ENCODE measurements at regions of chr7 and their contacts with region 1.

Region 1: GRCh38 chr7:18939771-18940592 is 177.5 kb downstream of the TWIST1 start:
- DNase-seq: no peak
- H3K4me3 ChIP-seq: no peak overlapping the region
- H3K27ac ChIP-seq: no peak overlapping the region
- H3K4me1 ChIP-seq: no peaks in the 10 kb centered on the region
- H3K27me3 ChIP-seq: no peaks in the 10 kb centered on the region
- CTCF ChIP-seq: no peak
- POLR2A ChIP-seq: no peak

Region 2: GRCh38 chr7:18866359-18867036 is 73.5 kb before region 1 on chr7:
- intact Hi-C with region 1: no loop called
- DNase-seq: peak in 1 of 2 donors; percentile 33
- H3K4me3 ChIP-seq: no peak overlapping the region
- H3K27ac ChIP-seq: peak overlapping the region; percentile 48 to 69
- H3K4me1 ChIP-seq: no peaks in the 10 kb centered on the region
- H3K27me3 ChIP-seq: no peaks in the 10 kb centered on the region
- CTCF ChIP-seq: no peak
- POLR2A ChIP-seq: no peak

Region 3: DNA sequence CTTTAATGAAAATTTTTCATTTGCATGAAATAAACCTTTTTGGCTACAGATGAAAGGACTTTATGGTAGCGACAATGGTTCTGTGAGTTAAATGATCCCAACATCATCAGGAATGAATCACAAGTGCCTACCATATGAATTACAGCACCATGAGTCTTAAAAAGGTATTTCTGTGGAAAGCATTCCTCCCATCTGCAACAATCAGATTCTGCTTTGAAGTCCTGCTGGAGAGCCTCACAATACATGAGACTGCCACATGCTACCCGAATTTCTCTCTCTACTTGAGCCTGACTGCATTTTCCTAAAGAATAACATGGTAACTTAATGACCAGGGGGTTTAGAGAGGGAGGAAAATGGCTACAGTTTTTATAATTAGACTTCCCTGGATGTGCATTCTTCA is 12.8 kb before region 1 on chr7:
- intact Hi-C with region 1: loop called (anchors 1 kb)
- DNase-seq: no peak
- H3K4me3 ChIP-seq: no peak overlapping the region
- H3K27ac ChIP-seq: no peak overlapping the region
- H3K4me1 ChIP-seq: no peaks in the 10 kb centered on the region
- H3K27me3 ChIP-seq: no peaks in the 10 kb centered on the region
- CTCF ChIP-seq: no peak
- POLR2A ChIP-seq: no peak

Region 4: GRCh38 chr7:19677180-19677579 is 737.2 kb after region 1 on chr7:
- intact Hi-C with region 1: no loop called
- DNase-seq: no peak
- H3K4me3 ChIP-seq: no peak overlapping the region
- H3K27ac ChIP-seq: no peak overlapping the region
- H3K4me1 ChIP-seq: no peaks in the 10 kb centered on the region
- H3K27me3 ChIP-seq: no peaks in the 10 kb centered on the region
- CTCF ChIP-seq: no peak
- POLR2A ChIP-seq: no peak

Measured in breast epithelium (tissue), 4 donors.